Sigmoid colon (tissue), 7 donors: ENCODE measurements at regions of chr9 and their contacts with region 1.

Region 1: DNA sequence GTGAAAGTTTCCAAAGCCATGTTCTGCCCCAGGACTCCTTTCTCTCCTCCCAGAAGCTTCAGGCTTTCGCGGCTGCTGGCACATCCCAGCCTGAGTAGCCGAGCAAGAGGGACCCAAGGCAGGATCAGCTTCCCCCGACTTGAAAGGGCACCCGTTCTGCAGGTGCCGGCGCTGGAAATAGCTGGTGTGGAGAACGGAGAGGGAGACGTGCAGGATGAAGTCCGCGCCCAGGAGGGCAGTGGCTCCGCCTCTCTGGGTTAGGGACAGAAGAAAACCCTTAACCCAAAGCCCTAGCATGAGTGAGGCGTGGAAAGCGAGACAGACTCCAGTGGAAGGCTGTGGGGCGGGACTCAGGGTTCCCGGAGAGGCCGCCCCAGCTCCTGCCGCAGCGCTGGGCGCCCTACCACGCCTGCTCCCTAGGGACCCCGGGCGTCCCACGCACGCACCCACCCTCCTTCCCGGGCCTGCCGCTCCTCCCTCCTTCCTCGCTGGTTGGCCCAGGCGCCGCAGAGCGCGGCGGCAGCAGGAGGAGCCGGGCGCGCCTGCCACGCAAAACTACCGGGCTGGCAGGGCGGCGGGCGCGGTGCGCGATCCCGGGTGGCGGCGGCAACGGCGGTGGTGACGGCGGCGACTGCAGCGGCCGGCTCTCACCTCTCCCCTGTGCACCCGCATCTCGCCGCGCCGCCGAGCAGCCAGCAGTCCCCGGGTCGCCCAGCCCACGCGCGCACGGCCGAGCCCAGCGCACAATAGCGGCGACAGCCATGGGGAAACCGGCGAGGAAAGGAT is at the start of gene SLC1A1:
- DNase-seq: peak; percentile 83
- H3K4me3 ChIP-seq: peak within 1 kb of the TSS; percentile 54 to 86 (median 75)
- H3K27ac ChIP-seq: peak within 1 kb of the TSS; percentile 76 to 90 (median 86)
- H3K4me1 ChIP-seq: peaks cover 0 to 23% (median 18%) of the 10 kb centered on the region in 4 donors
- H3K27me3 ChIP-seq: no peaks in the 10 kb centered on the region
- CTCF ChIP-seq: no peak
- EP300 ChIP-seq: no peak
- POLR2A ChIP-seq: peak in 1 of 2 donors; percentile 19
- total RNA-seq, gene SLC1A1: 3.3 to 7.5 (median 5.3) TPM

Region 2: GRCh38 chr9:4386819-4387218 is 103.3 kb before region 1 on chr9:
- intact Hi-C with region 1: no loop called
- DNase-seq: no peak
- H3K4me3 ChIP-seq: no peak overlapping the region
- H3K27ac ChIP-seq: no peak overlapping the region
- H3K4me1 ChIP-seq: no peaks in the 10 kb centered on the region
- H3K27me3 ChIP-seq: no peaks in the 10 kb centered on the region
- CTCF ChIP-seq: no peak
- EP300 ChIP-seq: no peak
- POLR2A ChIP-seq: no peak

Region 3: GRCh38 chr9:4553951-4554381 is 63.9 kb after region 1 on chr9:
- intact Hi-C with region 1: loop called (anchors 5 kb)
- DNase-seq: no peak
- H3K4me3 ChIP-seq: no peak overlapping the region
- H3K27ac ChIP-seq: peak overlapping the region in 2 of 4 donors; percentile 7 to 52
- H3K4me1 ChIP-seq: peaks cover 0 to 74% (median 63%) of the 10 kb centered on the region in 4 donors
- H3K27me3 ChIP-seq: no peaks in the 10 kb centered on the region
- CTCF ChIP-seq: no peak
- EP300 ChIP-seq: no peak
- POLR2A ChIP-seq: no peak

Region 4: GRCh38 chr9:4596165-4596922 is 106.2 kb after region 1 on chr9:
- intact Hi-C with region 1: loop called (anchors 5 kb)
- DNase-seq: no peak
- H3K4me3 ChIP-seq: no peak overlapping the region
- H3K27ac ChIP-seq: peak overlapping the region; percentile 31 to 52 (median 36)
- H3K4me1 ChIP-seq: peaks cover 0 to 34% (median 20%) of the 10 kb centered on the region in 4 donors
- H3K27me3 ChIP-seq: no peaks in the 10 kb centered on the region
- CTCF ChIP-seq: no peak
- EP300 ChIP-seq: peak in 1 of 4 donors; percentile 46
- POLR2A ChIP-seq: no peak